Common myeloid progenitor, CD34-positive (primary cell): ENCODE measurements at regions of chr3 and their contacts with region 1.

Region 1: GRCh38 chr3:132029182-132029902 is 5.5 kb downstream of the CPNE4 start:
- DNase-seq: peak; percentile 75 to 82 (median 76)
- H3K4me3 ChIP-seq: no peak overlapping the region
- H3K27ac ChIP-seq: no peak overlapping the region
- H3K4me1 ChIP-seq: peaks cover 0 to 8% (median 2%) of the 10 kb centered on the region in 4 experiments
- H3K27me3 ChIP-seq: peaks cover 10 to 44% (median 22%) of the 10 kb centered on the region in 5 experiments

Region 2: DNA sequence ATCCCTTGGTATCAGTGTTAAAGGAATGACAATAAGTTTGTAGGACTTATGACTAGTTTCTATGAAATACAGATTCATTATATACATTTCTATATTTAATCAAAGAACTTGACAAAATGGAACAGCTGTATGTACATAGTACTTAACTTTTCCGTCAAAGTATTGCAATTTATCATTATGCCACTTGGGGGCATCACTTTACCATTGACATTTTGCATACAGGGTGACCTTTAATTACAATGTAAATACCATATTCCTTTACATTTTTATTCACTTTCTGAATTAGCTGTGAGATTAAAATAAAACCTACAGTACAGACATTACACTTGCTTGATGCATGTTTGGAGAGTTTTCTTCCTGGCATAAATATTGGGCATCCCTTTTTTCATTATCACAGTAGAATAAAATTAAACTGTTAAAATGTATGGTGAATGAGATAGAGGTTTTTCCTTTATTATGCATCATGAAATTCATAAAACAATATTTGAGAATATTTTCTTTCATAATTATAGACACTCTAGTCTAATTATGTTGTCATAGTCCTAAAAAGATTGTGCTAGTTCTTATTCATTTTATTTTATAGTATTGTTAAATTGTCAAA is 995.8 kb before region 1 on chr3:
- CTCF ChIA-PET with region 1: interaction called, 10 read pairs
- POLR2A ChIA-PET with region 1: no interaction called
- DNase-seq: peak; percentile 52 to 77 (median 69)
- H3K4me3 ChIP-seq: no peak overlapping the region
- H3K27ac ChIP-seq: no peak overlapping the region
- H3K4me1 ChIP-seq: no peaks in the 10 kb centered on the region
- H3K27me3 ChIP-seq: no peaks in the 10 kb centered on the region

Region 3: GRCh38 chr3:131794766-131795388 is 234.5 kb before region 1 on chr3:
- CTCF ChIA-PET with region 1: interaction called, 20 read pairs
- POLR2A ChIA-PET with region 1: no interaction called
- DNase-seq: peak; percentile 65 to 82 (median 78)
- H3K4me3 ChIP-seq: no peak overlapping the region
- H3K27ac ChIP-seq: no peak overlapping the region
- H3K4me1 ChIP-seq: peaks cover 16 to 30% (median 25%) of the 10 kb centered on the region in 4 experiments
- H3K27me3 ChIP-seq: no peaks in the 10 kb centered on the region

Region 4: DNA sequence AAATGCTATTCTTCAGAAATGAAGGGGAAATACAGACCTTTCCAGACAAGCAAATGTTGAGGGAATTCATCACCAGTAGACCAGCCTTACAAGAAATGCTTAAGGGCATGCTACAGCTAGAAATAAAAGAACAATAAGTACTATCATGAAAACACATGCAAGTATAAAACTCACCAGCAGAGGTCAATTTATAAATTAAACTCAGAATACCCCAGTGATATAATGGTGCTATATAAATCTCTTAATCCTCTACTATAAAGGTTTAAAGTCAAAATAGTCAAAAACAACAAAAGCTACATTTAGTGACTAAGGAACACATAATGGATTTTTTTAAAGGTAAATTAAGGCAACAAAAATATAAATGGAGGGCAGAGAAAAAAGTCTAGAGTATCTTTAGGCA is 137.0 kb before region 1 on chr3:
- CTCF ChIA-PET with region 1: no interaction called
- POLR2A ChIA-PET with region 1: no interaction called
- DNase-seq: no peak
- H3K4me3 ChIP-seq: no peak overlapping the region
- H3K27ac ChIP-seq: no peak overlapping the region
- H3K4me1 ChIP-seq: no peaks in the 10 kb centered on the region
- H3K27me3 ChIP-seq: peaks cover 0 to 2% (median 0%) of the 10 kb centered on the region in 5 experiments

Region 5: DNA sequence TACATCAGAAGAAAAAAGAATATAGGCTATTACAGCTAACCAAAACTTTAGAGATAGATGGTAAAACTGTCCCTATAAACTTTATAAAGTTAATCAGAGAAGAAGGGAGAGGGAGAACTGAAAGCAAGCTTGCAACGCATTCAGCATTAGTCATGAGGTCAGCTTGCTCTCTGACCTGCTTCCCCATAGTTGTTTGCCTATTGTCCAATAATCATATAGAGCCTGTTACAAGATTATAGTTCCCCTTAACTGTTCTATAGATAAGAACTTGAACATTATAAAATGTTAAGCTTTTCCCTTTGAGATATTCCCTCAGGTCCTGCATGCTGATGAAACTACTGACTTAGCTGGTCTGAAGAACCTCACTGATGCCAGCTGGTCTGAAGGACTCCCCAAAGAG is 69.0 kb before region 1 on chr3:
- CTCF ChIA-PET with region 1: no interaction called
- POLR2A ChIA-PET with region 1: no interaction called
- DNase-seq: no peak
- H3K4me3 ChIP-seq: no peak overlapping the region
- H3K27ac ChIP-seq: no peak overlapping the region
- H3K4me1 ChIP-seq: no peaks in the 10 kb centered on the region
- H3K27me3 ChIP-seq: peaks cover 0 to 9% (median 2%) of the 10 kb centered on the region in 5 experiments

Region 6: DNA sequence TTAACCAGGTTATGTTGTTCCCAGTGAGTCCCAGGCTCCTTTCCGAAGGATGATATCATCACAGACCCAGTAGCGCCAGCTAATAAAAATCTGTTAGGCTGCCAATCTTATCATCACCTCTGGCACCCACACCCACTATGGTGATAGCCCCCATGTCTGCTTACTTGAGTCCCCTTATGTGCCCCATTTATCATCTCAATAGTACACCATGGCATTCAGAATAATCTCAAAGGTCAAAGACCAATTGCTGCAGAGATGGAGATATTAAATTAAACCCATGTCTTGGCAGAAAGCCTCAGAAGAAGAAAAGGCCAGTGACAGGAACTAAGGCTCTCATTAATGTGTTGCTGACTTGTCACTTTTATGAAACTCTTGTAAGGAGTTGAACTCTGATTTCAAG is 27.3 kb before region 1 on chr3:
- CTCF ChIA-PET with region 1: no interaction called
- POLR2A ChIA-PET with region 1: no interaction called
- DNase-seq: no peak
- H3K4me3 ChIP-seq: no peak overlapping the region
- H3K27ac ChIP-seq: no peak overlapping the region
- H3K4me1 ChIP-seq: no peaks in the 10 kb centered on the region
- H3K27me3 ChIP-seq: peaks cover 0 to 5% (median 3%) of the 10 kb centered on the region in 5 experiments